ENCODE measurements at regions of chr10 and their contacts with region 1.

Region 1: GRCh38 chr10:51422311-51423120 is 276.9 kb downstream of the CSTF2T start:
- DNase-seq: peak; percentile 8
- ATAC-seq: peak; percentile 90
- H3K4me3 ChIP-seq: no peak overlapping the region
- H3K27ac ChIP-seq: no peak overlapping the region
- H3K4me1 ChIP-seq: no peaks in the 10 kb centered on the region
- H3K27me3 ChIP-seq: no peaks in the 10 kb centered on the region
- CTCF ChIP-seq: peak; percentile 59 to 71 (median 67)
- EP300 ChIP-seq: no peak
- POLR2A ChIP-seq: no peak
- RAD21 ChIP-seq: peak; percentile 55

Region 2: GRCh38 chr10:51001587-51001986 is 420.9 kb before region 1 on chr10:
- CTCF ChIA-PET with region 1: no interaction called
- POLR2A ChIA-PET with region 1: no interaction called
- RAD21 ChIA-PET with region 1: no interaction called
- SMC1A ChIA-PET with region 1: no interaction called
- in situ Hi-C with region 1: no loop called
- intact Hi-C with region 1: loop called (anchors 5 kb)
- DNase-seq: no peak
- ATAC-seq: peak; percentile 69
- H3K4me3 ChIP-seq: no peak overlapping the region
- H3K27ac ChIP-seq: no peak overlapping the region
- H3K4me1 ChIP-seq: no peaks in the 10 kb centered on the region
- H3K27me3 ChIP-seq: no peaks in the 10 kb centered on the region; a peak in 1 of 4 replicates
- CTCF ChIP-seq: peak; percentile 36 to 50 (median 41); a peak in 5 of 6 replicates
- EP300 ChIP-seq: no peak
- POLR2A ChIP-seq: no peak
- RAD21 ChIP-seq: peak; percentile 42

Region 3: DNA sequence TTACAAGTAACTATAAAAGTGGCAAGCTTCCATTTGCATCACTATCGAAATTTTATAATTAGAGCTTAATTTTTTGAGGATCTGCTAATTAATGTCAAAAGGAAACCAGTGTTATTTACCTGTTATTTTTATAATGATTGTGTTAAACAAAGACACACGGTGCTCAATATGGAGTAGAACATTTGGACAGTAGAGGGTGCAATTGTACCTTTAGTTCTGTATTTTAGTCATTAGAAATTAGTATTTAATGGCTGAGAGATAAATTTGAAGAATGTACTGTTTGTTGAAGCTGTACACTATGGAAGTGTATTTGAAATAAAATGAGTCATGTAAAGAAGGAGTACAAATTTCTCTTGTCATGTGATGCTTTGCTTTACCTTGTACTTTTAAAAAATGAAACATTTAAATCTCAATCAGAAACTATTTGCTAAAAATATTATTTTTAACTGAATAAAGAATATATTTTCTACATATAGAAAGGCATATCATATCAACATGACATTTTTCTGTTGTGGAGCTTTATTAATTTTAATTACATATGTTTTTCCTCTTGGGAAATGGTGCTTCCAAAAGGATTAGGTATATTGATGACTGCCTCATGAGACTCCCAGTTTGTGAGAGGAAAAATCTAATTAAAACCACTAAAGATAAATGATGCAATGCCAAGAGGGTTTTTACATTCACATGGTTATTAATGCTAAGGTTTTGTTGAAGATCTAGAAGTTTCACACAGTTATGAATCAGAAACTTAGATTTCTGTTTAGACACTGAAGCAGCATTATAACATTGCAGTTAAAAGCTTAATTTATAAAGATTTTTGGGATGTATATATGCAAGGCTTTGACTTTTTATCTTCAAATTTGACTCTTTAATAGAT is 358.6 kb before region 1 on chr10:
- CTCF ChIA-PET with region 1: no interaction called
- POLR2A ChIA-PET with region 1: no interaction called
- RAD21 ChIA-PET with region 1: interaction called, 3 read pairs
- SMC1A ChIA-PET with region 1: interaction called, 7 read pairs
- in situ Hi-C with region 1: no loop called
- intact Hi-C with region 1: loop called (anchors 5 kb)
- DNase-seq: no peak
- ATAC-seq: peak; percentile 50; the same call in 2 of the 3 replicates
- H3K4me3 ChIP-seq: no peak overlapping the region
- H3K27ac ChIP-seq: no peak overlapping the region
- H3K4me1 ChIP-seq: no peaks in the 10 kb centered on the region
- H3K27me3 ChIP-seq: no peaks in the 10 kb centered on the region
- CTCF ChIP-seq: peak; percentile 25 to 56 (median 37); a peak in 3 of 6 replicates
- EP300 ChIP-seq: no peak
- POLR2A ChIP-seq: no peak
- RAD21 ChIP-seq: peak; percentile 40; the same call in 1 of the 2 replicates

Region 4: GRCh38 chr10:51109801-51110533 is 312.5 kb before region 1 on chr10:
- CTCF ChIA-PET with region 1: no interaction called
- POLR2A ChIA-PET with region 1: no interaction called
- RAD21 ChIA-PET with region 1: no interaction called
- SMC1A ChIA-PET with region 1: no interaction called
- in situ Hi-C with region 1: no loop called
- intact Hi-C with region 1: no loop called
- DNase-seq: no peak
- ATAC-seq: no peak
- H3K4me3 ChIP-seq: no peak overlapping the region
- H3K27ac ChIP-seq: no peak overlapping the region
- H3K4me1 ChIP-seq: no peaks in the 10 kb centered on the region
- H3K27me3 ChIP-seq: no peaks in the 10 kb centered on the region
- CTCF ChIP-seq: no peak
- EP300 ChIP-seq: no peak
- POLR2A ChIP-seq: no peak
- RAD21 ChIP-seq: no peak

Region 5: DNA sequence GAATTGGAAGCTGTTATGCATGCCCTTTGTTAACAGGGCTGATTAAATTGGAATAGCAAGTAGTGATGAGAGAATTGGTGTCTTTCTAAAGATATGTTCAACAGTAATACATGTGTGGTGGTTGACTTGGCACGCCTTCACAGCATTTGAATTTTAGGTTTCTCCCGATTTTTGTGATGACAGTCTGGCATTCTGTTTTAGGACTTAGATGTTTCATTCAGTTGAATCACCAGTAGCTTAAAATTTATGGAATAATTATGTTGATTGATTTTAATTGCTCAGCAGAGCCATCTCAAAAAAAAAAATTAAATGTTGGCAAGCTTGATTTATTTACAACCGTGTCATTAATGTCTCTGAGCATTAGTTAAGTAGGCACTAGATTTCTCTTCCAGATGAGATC is 57.2 kb after region 1 on chr10:
- CTCF ChIA-PET with region 1: no interaction called
- POLR2A ChIA-PET with region 1: no interaction called
- RAD21 ChIA-PET with region 1: no interaction called
- SMC1A ChIA-PET with region 1: no interaction called
- in situ Hi-C with region 1: no loop called
- intact Hi-C with region 1: no loop called
- DNase-seq: no peak
- ATAC-seq: no peak
- H3K4me3 ChIP-seq: no peak overlapping the region
- H3K27ac ChIP-seq: no peak overlapping the region
- H3K4me1 ChIP-seq: no peaks in the 10 kb centered on the region
- H3K27me3 ChIP-seq: no peaks in the 10 kb centered on the region
- CTCF ChIP-seq: no peak
- EP300 ChIP-seq: no peak
- POLR2A ChIP-seq: no peak
- RAD21 ChIP-seq: no peak

Measured in GM12878 (cell line).